ENCODE measurements at regions of chr11 and their contacts with region 1.

Region 1: GRCh38 chr11:68517121-68517741 is 56.7 kb downstream of the PPP6R3 start:
- DNase-seq: no peak
- H3K4me3 ChIP-seq: no peak overlapping the region
- H3K27ac ChIP-seq: no peak overlapping the region
- H3K4me1 ChIP-seq: no peaks in the 10 kb centered on the region
- H3K27me3 ChIP-seq: no peaks in the 10 kb centered on the region
- CTCF ChIP-seq: no peak

Region 2: DNA sequence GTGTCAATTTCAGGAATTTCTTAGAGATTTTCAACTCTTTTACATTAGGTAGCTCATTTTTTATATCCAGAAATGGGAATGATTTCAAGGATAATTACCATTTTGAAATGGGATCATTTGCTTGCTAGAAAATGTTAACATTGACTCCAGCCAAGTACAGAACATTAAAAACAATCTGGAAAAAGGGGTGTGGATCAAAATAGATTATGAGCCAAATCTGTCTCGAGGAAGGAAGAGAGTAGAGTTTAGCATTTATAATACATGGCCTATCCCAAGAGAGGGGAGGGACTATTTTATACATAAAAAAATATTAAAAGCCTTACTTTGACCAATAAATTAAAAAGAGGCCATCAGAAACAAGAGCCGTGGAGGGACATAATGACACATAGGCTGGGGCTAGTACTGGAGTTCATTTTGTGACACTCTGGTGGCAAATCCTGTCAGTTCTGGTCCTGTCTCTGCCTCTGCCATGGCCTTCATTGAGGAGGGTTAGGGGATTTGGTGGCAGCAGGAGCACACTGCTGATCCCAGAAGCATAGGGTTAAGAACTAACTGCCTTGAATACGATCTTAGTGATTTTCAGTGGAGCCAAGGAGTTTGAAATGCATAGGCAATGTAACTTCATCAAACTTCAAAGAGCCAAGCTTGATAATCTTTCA is 36.2 kb before region 1 on chr11:
- CTCF ChIA-PET with region 1: no interaction called
- POLR2A ChIA-PET with region 1: no interaction called
- intact Hi-C with region 1: no loop called
- DNase-seq: no peak
- H3K4me3 ChIP-seq: no peak overlapping the region
- H3K27ac ChIP-seq: no peak overlapping the region
- H3K4me1 ChIP-seq: no peaks in the 10 kb centered on the region
- H3K27me3 ChIP-seq: no peaks in the 10 kb centered on the region
- CTCF ChIP-seq: no peak

Region 3: GRCh38 chr11:68643585-68643984 is 126.4 kb after region 1 on chr11:
- CTCF ChIA-PET with region 1: interaction called, 3 read pairs
- POLR2A ChIA-PET with region 1: no interaction called
- intact Hi-C with region 1: loop called (anchors 1 kb)
- DNase-seq: peak; percentile 59
- H3K4me3 ChIP-seq: no peak overlapping the region
- H3K27ac ChIP-seq: no peak overlapping the region
- H3K4me1 ChIP-seq: no peaks in the 10 kb centered on the region
- H3K27me3 ChIP-seq: peaks cover 13% of the 10 kb centered on the region
- CTCF ChIP-seq: peak; percentile 53

Region 4: DNA sequence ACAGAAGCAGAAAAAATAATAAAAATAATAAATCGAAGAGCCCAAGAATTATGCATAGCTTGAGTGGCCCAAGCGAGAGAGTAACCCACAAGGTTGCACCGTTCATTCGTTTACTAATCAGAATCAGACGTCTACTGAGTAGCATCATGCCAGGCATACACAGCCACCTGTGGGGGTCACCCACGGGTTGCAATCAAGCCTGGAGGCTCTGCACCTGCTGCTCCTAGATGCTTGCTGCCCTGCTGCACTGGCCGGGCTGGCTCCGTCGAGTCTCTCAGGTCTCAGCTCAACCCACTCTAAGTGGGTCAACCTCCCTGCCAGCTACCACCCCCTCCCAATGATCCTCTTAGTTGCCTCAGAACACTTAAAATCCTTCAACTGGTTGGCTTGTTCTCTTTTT is 236.1 kb after region 1 on chr11:
- CTCF ChIA-PET with region 1: no interaction called
- POLR2A ChIA-PET with region 1: no interaction called
- intact Hi-C with region 1: no loop called
- DNase-seq: no peak
- H3K4me3 ChIP-seq: no peak overlapping the region
- H3K27ac ChIP-seq: no peak overlapping the region
- H3K4me1 ChIP-seq: no peaks in the 10 kb centered on the region
- H3K27me3 ChIP-seq: no peaks in the 10 kb centered on the region
- CTCF ChIP-seq: no peak